Dorsolateral prefrontal cortex (tissue), 120 donors: ENCODE measurements at regions of chr10 and their contacts with region 1.

Region 1: DNA sequence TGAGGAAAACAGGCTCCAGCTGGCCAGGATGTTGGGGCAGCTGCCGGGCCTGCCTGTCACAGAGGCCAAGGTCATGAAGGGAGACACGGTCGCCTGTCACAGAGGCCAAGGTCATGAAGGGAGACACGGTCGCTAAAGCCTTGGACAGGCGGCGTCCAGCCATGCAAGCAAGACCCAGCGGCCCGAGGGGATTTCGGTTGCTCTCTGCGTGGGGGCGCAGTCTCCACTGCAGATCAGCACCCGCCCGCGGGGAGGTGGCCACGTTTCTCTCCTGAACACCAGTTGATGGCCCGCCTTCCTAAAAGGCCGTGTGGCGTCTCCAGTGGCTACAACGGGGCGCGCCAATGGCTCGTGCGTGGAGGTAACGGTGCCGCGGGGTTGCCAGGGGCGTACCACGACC is 67.0 kb upstream of the PCGF5 start:
- DNase-seq: no peak
- H3K4me3 ChIP-seq: no peak overlapping the region
- H3K27ac ChIP-seq: no peak overlapping the region
- H3K27me3 ChIP-seq: no peaks in the 10 kb centered on the region
- CTCF ChIP-seq: no peak

Region 2: DNA sequence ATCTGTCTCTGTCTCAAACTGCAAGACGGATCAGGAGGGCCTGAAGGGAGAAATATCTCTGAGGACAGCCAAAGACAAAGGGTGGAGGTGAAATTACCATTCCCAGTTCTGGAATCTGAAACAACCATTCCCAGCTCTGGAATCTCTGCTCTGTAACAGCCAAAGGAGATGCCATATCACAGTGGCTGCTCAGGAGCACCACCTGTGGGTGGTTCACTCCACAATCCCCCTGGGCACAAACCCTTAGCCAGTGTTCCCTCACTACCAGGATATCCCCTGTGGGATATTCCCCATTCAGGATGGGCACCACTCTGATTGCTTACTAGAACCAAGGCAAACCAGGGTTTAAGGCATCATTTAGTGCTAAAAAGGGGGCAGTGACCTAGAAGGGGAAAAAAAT is 494.7 kb before region 1 on chr10:
- intact Hi-C with region 1: no loop called
- DNase-seq: no peak
- H3K4me3 ChIP-seq: no peak overlapping the region
- H3K27ac ChIP-seq: no peak overlapping the region
- H3K27me3 ChIP-seq: peaks cover 0 to 5% (median 0%) of the 10 kb centered on the region in 45 donors
- CTCF ChIP-seq: no peak

Region 3: DNA sequence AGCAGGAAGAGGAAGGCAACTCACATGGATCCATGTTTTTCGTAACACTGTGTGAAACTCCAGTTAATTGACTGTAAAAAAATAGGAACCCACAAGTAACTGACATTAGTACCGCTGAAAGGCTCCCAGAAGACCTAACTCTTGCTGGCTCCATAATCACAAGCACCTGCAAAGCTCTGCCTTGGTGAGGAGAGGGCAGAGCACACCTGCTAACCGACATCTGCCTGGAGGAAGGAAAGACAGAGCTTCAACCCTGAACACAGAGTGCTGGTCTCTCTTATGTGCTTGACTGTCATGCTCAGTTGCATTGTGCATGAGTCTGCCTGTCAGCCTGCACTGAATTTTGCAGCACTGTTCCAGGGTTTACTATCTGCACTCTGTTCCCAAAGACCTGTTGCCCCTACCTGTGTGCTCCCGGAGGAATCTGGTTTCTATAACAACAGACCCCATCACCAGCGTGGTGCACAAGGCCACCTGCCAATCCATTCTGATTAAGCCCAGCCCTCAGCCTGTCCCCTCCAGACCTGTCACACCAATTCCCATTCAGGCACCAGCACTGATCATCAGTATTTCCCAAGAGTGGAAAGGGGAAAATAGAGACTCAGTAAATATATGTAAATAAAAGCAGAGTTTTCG is 169.5 kb before region 1 on chr10:
- intact Hi-C with region 1: no loop called
- DNase-seq: no peak
- H3K4me3 ChIP-seq: no peak overlapping the region
- H3K27ac ChIP-seq: peak overlapping the region in 7 of 59 donors; percentile 1 to 40 (median 20)
- H3K27me3 ChIP-seq: no peaks in the 10 kb centered on the region
- CTCF ChIP-seq: no peak

Region 4: GRCh38 chr10:91172348-91172747 is 18.8 kb after region 1 on chr10:
- intact Hi-C with region 1: no loop called
- DNase-seq: no peak
- H3K4me3 ChIP-seq: no peak overlapping the region
- H3K27ac ChIP-seq: no peak overlapping the region
- H3K27me3 ChIP-seq: no peaks in the 10 kb centered on the region
- CTCF ChIP-seq: no peak

Region 5: GRCh38 chr10:91541481-91541880 is 388.0 kb after region 1 on chr10:
- intact Hi-C with region 1: loop called in 1 of 2 experiments (anchors 5 kb)
- DNase-seq: peak in 1 of 10 donors; percentile 59
- H3K4me3 ChIP-seq: peak overlapping the region in 3 of 59 donors; percentile 0 to 7 (median 2)
- H3K27ac ChIP-seq: peak overlapping the region in 11 of 59 donors; percentile 4 to 70 (median 14)
- H3K27me3 ChIP-seq: no peaks in the 10 kb centered on the region
- CTCF ChIP-seq: no peak